ENCODE measurements at regions of chr1 and their contacts with region 1.

Region 1: GRCh38 chr1:199684686-199685273 is 342.7 kb upstream of the NR5A2 start:
- DNase-seq: peak; percentile 82
- H3K4me3 Mint-ChIP-seq: no peak overlapping the region
- H3K27ac Mint-ChIP-seq: no peak overlapping the region
- H3K4me1 Mint-ChIP-seq: peaks cover 18% of the 10 kb centered on the region
- H3K27me3 Mint-ChIP-seq: no peaks in the 10 kb centered on the region
- CTCF ChIP-seq: peak; percentile 96

Region 2: GRCh38 chr1:199780948-199781347 is 96.2 kb after region 1 on chr1:
- CTCF ChIA-PET with region 1: interaction called, 8 read pairs
- POLR2A ChIA-PET with region 1: interaction called, 5 read pairs
- intact Hi-C with region 1: loop called (anchors 5 kb)
- DNase-seq: peak; percentile 47
- H3K4me3 Mint-ChIP-seq: no peak overlapping the region
- H3K27ac Mint-ChIP-seq: peak overlapping the region; percentile 86
- H3K4me1 Mint-ChIP-seq: peaks cover 35% of the 10 kb centered on the region
- H3K27me3 Mint-ChIP-seq: no peaks in the 10 kb centered on the region
- CTCF ChIP-seq: no peak

Region 3: GRCh38 chr1:200128944-200129885 is 444.4 kb after region 1 on chr1:
- CTCF ChIA-PET with region 1: interaction called, 10 read pairs
- POLR2A ChIA-PET with region 1: no interaction called
- intact Hi-C with region 1: no loop called
- DNase-seq: no peak
- H3K4me3 Mint-ChIP-seq: no peak overlapping the region
- H3K27ac Mint-ChIP-seq: no peak overlapping the region
- H3K4me1 Mint-ChIP-seq: peaks cover 3% of the 10 kb centered on the region
- H3K27me3 Mint-ChIP-seq: no peaks in the 10 kb centered on the region
- CTCF ChIP-seq: no peak

Region 4: DNA sequence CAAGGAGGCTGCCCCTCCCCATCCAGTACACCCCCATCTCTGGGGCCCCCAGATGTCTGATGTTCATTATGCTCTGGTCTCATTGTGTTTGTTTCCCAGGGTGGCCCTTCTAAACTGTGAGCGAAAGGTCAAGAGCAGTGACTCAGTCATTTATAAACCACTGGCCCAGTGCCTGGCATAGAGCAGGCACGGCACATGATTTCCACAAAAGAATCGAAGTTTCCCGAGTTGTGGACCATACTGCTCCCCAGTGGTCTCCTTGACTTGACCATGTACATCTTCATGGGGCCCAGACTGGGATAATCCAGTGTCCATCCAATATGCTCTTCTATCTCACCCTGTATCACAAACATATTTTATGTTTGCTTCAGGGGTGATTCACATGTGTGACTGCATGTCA is 496.0 kb after region 1 on chr1:
- CTCF ChIA-PET with region 1: interaction called, 12 read pairs
- POLR2A ChIA-PET with region 1: no interaction called
- intact Hi-C with region 1: loop called (anchors 1 kb)
- DNase-seq: peak; percentile 95
- H3K4me3 Mint-ChIP-seq: no peak overlapping the region
- H3K27ac Mint-ChIP-seq: no peak overlapping the region
- H3K4me1 Mint-ChIP-seq: peaks cover 49% of the 10 kb centered on the region
- H3K27me3 Mint-ChIP-seq: no peaks in the 10 kb centered on the region
- CTCF ChIP-seq: peak; percentile 27

Region 5: DNA sequence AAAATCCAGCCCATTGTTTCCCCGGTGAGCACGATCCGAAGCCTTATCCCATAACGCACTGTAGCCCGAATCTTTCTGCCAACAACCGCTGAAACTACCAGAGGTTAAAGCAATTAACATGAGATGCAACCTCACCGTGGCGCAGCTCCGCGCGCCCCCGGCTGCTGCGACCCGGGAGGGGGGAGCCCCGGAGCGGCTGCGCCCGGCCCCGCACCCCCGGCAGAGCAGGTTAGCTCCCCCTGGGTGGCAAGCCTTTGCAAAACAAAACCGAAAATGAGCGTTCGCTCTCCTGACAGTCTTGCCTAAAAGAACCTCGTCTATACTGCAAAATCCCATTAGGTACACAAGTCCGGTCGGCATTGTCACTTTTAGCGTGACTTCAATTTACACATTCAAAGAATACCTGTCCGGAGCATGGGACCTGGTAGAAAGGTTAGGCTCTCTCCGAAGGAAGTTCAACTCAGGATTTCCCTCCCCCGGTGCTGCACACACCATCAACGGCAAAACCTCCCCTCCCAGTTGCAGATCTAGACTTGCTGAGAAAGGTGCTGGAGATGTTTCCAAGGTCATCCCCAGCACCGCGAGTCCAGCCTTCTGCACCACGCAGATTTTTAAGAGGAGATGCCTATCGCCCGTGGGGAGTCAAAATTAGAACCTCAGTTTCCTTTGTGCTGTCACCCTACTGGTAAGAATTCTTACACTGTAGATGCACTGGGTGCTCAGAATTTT is 617.6 kb after region 1 on chr1:
- CTCF ChIA-PET with region 1: interaction called, 43 read pairs
- POLR2A ChIA-PET with region 1: interaction called, 5 read pairs
- intact Hi-C with region 1: loop called (anchors 1 kb)
- DNase-seq: peak; percentile 49
- H3K4me3 Mint-ChIP-seq: peak overlapping the region; percentile 73
- H3K27ac Mint-ChIP-seq: no peak overlapping the region
- H3K4me1 Mint-ChIP-seq: peaks cover 2% of the 10 kb centered on the region
- H3K27me3 Mint-ChIP-seq: no peaks in the 10 kb centered on the region
- CTCF ChIP-seq: no peak

Region 6: DNA sequence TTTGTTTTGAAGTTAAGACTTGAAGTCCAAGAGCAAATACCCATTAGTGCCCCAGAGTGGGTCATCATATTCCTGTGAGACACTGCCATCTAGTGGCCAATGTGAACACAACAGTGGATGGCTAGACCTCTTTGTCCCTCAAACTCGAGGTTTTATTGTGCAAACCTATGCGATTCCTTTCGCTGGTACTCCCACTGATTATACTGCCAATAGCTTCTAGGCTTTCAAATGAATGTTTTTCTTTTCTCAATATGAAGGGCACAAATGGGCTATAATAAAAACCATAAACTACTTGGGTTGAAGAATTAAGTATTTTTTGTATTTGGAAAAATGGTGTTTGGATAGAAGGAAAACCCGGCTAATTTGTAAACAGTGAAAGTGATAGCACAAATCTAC is 825.4 kb after region 1 on chr1:
- CTCF ChIA-PET with region 1: interaction called, 73 read pairs
- POLR2A ChIA-PET with region 1: interaction called, 3 read pairs
- intact Hi-C with region 1: loop called (anchors 1 kb)
- DNase-seq: peak; percentile 98
- H3K4me3 Mint-ChIP-seq: no peak overlapping the region
- H3K27ac Mint-ChIP-seq: no peak overlapping the region
- H3K4me1 Mint-ChIP-seq: peaks cover 11% of the 10 kb centered on the region
- H3K27me3 Mint-ChIP-seq: peaks cover 24% of the 10 kb centered on the region
- CTCF ChIP-seq: peak; percentile 99